Sciatic nerve (tissue), 2 donors: ENCODE measurements at regions of chr15 and their contacts with region 1.

Region 1: GRCh38 chr15:70097337-70098169 is at the start of gene TLE3:
- DNase-seq: peak; percentile 99
- ATAC-seq: peak; percentile 82
- total RNA-seq, gene TLE3: 90.1 TPM

Region 2: DNA sequence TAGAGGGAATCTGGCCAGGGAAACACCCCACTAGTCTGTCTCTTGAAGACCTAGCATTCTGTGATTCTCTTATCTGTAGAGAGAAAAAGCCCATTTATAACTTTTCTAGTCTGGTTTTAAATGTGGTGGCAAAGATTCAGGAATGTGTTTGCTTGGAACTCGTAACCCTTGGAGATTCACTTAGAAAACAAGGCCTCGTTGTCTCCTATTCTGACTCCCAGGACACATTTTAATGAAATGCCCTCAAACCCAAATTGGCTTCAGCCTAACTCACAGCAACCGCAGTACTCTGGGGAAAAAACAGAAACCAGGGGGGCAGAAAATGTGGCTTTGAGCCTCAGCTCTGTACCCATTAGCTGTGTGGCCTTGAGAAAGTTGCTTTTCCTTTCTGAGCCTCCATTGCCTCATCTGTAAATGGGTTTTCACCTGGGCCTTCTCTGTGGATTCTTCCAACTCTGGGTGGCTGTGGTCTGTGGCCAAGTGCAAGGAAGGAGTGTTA is 608.4 kb before region 1 on chr15:
- intact Hi-C with region 1: loop called (anchors 10 kb)
- DNase-seq: peak; percentile 49
- ATAC-seq: peak; percentile 72

Region 3: DNA sequence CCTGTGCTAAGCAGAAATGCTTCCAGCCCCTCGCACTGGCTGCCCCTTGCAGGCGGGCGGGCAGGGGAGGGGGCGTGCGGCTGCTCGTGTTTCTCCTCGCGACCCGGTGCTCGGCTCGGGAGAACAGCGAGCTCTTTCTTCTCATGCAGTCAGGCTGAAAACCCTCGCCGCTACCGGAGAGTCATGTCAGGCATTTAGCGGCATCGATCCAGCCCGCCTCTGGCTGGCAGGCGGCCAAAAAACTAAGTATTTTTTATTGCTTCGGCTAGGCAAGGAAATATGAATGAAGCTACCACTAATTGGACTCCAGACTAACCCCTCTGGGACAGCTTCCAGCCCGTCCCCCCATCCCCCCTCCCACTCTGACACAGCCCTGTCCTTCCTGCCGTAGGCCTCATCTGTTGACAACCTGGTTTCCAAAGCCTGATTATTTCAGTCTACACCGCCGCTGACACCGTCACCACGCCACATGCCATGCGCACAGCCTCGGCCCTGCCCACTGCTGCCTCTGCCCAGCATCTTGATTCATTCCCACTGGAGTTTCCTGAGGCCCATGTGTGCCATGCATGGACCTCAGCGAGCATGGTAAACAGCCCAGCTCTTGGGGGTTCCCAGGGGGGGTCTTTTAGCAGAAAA is 35.1 kb before region 1 on chr15:
- intact Hi-C with region 1: loop called (anchors 5 kb)
- DNase-seq: peak; percentile 91
- ATAC-seq: peak; percentile 80